Colonic mucosa (tissue), 4 donors: ENCODE measurements at regions of chr2 and their contacts with region 1.

Region 1: DNA sequence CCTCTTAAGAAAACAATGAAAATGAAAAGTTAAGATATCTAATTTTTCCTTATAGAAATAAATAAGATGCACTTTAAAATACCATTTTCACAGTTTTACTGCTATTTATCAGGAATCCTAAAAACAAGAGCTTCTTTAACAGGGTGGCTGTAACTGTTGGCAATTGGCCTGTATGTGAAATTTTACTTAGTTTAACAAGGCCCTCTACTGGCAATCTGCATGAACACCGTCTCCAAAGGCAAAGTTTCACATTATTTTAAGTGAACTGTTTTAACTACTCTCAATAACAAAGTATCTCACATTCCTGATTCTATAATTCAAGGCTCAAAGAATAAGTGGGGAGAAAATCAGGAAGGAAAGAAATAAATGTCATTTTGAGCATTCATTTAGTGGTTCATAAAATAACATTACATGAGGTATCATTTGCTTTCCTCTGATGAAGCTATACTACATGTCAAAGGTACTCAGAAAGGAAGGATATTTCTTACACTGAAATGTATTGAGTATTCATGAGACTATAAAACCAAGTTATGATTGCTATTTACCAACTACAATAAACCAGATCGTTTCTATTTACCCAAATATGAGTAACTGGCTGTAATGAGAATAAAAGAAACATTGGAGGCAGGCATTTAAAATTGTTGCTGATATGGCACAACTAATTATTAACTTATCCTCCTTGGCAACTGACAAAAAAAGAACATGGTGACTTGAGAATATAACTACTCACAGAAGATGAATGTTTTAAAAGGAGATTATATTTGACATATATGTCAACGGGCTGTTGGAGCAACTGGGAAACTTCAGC is 7.0 kb downstream of the NCKAP5 start:
- DNase-seq: peak; percentile 25
- H3K4me3 ChIP-seq: no peak overlapping the region
- H3K27ac ChIP-seq: no peak overlapping the region
- H3K4me1 ChIP-seq: no peaks in the 10 kb centered on the region
- H3K27me3 ChIP-seq: no peaks in the 10 kb centered on the region
- CTCF ChIP-seq: peak; percentile 52

Region 2: GRCh38 chr2:132547074-132547687 is 1014.1 kb before region 1 on chr2:
- intact Hi-C with region 1: loop called (anchors 10 kb)
- DNase-seq: peak; percentile 78
- H3K4me3 ChIP-seq: no peak overlapping the region
- H3K27ac ChIP-seq: no peak overlapping the region
- H3K4me1 ChIP-seq: no peaks in the 10 kb centered on the region
- H3K27me3 ChIP-seq: no peaks in the 10 kb centered on the region
- CTCF ChIP-seq: peak; percentile 65

Region 3: DNA sequence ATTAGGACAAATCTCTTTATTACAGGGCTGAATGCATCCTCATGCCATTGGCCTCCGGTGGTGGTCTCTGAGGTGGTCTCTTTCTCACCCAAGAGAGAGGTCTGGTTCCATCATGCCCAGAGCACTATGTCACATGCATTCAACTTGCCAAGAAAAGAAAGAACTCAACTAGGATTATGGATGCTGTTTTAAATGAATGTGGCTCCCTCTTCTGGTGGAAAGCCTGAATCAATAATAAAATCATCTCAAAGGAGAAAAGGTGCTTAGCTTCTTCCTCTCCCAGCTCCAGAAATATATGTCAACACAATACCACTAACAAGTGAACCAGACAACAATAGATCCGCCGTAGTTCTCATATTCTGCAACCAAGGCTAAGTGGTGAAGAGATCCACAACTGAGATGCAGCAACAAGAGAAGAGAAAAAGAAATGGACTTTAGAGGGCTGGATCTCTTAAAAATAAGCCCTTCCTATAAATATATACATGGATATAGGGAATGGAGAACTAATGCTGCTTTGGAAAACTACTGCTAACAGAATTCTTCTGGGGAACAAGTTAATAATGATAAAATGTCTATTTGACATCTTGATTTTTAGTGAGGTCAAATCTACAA is 389.8 kb before region 1 on chr2:
- intact Hi-C with region 1: loop called (anchors 5 kb)
- DNase-seq: peak; percentile 23
- H3K4me3 ChIP-seq: no peak overlapping the region
- H3K27ac ChIP-seq: no peak overlapping the region
- H3K4me1 ChIP-seq: no peaks in the 10 kb centered on the region
- H3K27me3 ChIP-seq: no peaks in the 10 kb centered on the region
- CTCF ChIP-seq: peak; percentile 54

Region 4: GRCh38 chr2:133421516-133422312 is 139.5 kb before region 1 on chr2:
- intact Hi-C with region 1: loop called (anchors 10 kb)
- DNase-seq: peak; percentile 66
- H3K4me3 ChIP-seq: no peak overlapping the region
- H3K27ac ChIP-seq: peak overlapping the region; percentile 39
- H3K4me1 ChIP-seq: no peaks in the 10 kb centered on the region
- H3K27me3 ChIP-seq: no peaks in the 10 kb centered on the region
- CTCF ChIP-seq: no peak

Region 5: GRCh38 chr2:133521146-133521745 is 40.0 kb before region 1 on chr2:
- intact Hi-C with region 1: loop called (anchors 5 kb)
- DNase-seq: no peak
- H3K4me3 ChIP-seq: no peak overlapping the region
- H3K27ac ChIP-seq: no peak overlapping the region
- H3K4me1 ChIP-seq: no peaks in the 10 kb centered on the region
- H3K27me3 ChIP-seq: no peaks in the 10 kb centered on the region
- CTCF ChIP-seq: no peak